Activated CD4-positive, alpha-beta memory T cell treated with anti-CD3 and anti-CD28 coated beads, Interleukin-2, amount 10 ng/mL, durations not matched to agents 7 days and 5 days (primary cell): ENCODE measurements at regions of chr11 and their contacts with region 1.

Region 1: DNA sequence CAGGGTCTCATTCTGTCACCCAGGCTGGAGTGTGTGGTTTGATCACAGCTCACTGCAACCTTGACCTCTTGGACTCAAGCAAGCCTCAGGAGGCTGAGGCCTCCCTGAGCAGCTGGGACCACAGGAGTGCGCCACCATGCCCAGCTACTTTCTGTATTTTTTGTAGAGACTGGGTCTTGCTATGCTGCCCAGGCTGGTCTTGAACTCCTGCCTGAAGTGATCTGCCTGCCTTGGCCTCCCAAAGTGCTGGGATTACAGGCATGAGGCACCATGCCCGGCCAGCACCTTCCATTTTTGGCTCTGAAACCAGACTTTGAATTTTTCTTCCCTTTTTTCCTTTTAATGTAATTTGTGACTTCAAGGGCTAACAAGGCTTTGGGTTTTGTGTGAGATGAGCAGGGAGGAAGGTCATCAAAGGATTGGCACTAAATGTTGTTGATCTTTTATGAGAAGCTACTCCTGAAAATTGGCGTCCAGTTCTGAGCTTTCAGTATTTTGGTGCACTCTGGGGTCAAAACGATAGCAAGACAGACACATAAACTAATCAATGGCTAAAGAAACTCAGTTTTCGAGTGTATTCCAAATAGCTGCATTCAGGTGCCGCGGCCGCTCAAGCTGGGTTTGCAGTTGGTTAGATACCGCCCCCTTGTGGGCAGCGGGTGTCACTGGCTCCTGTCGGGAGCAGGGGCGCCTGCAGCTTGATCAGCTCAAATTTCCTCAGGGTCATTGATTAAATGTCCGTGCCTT is 51.9 kb upstream of the CLMP start:
- DNase-seq: peak; percentile 86
- H3K4me3 Mint-ChIP-seq: no peak overlapping the region
- H3K27ac Mint-ChIP-seq: no peak overlapping the region
- H3K4me1 Mint-ChIP-seq: peaks cover 10% of the 10 kb centered on the region
- H3K27me3 Mint-ChIP-seq: peaks cover 30% of the 10 kb centered on the region

Region 2: GRCh38 chr11:123033895-123034294 is 213.0 kb before region 1 on chr11:
- CTCF ChIA-PET with region 1: interaction called, 10 read pairs
- POLR2A ChIA-PET with region 1: no interaction called
- DNase-seq: no peak
- H3K4me3 Mint-ChIP-seq: no peak overlapping the region
- H3K27ac Mint-ChIP-seq: no peak overlapping the region
- H3K4me1 Mint-ChIP-seq: no peaks in the 10 kb centered on the region
- H3K27me3 Mint-ChIP-seq: peaks cover 2% of the 10 kb centered on the region

Region 3: DNA sequence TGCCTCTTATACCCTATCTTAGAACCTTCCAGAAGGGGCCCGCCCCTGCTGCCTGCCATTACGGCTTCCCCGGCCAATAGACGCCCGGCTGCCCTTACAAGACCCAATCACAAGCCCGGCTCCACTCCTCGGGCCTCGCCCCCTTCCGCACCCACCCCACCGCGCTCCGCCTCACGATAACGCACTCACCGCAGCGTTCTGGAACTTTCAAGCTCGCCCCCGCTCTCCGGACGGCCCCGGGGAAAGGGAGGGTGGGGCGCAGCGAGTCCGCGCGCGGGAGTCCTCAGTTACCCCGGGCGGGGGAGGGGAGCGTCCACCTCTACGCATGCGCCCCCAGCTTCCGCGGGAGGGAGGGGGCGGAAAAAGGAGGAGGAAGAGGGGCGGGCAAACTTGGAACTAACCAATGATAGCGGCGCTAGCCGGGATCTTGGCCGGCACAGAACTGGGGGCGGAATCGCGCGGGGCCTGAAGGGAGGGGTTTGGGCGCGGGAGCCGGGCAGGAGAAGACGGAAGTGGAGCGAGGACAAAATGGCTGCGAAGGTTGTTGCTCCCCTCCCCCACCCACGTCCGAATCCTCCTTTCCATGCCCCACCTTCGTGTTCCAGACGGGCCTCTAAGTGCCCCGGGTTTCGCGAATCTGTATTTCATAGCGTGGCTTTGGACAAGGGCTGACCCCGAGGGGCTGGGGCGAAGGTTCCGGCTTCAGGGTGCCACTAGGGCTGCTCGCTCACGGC is 184.6 kb before region 1 on chr11:
- CTCF ChIA-PET with region 1: interaction called, 11 read pairs
- POLR2A ChIA-PET with region 1: interaction called, 5 read pairs
- DNase-seq: peak; percentile 99
- H3K4me3 Mint-ChIP-seq: peak overlapping the region; percentile 90
- H3K27ac Mint-ChIP-seq: peak overlapping the region; percentile 99
- H3K4me1 Mint-ChIP-seq: peaks cover 46% of the 10 kb centered on the region
- H3K27me3 Mint-ChIP-seq: no peaks in the 10 kb centered on the region

Region 4: DNA sequence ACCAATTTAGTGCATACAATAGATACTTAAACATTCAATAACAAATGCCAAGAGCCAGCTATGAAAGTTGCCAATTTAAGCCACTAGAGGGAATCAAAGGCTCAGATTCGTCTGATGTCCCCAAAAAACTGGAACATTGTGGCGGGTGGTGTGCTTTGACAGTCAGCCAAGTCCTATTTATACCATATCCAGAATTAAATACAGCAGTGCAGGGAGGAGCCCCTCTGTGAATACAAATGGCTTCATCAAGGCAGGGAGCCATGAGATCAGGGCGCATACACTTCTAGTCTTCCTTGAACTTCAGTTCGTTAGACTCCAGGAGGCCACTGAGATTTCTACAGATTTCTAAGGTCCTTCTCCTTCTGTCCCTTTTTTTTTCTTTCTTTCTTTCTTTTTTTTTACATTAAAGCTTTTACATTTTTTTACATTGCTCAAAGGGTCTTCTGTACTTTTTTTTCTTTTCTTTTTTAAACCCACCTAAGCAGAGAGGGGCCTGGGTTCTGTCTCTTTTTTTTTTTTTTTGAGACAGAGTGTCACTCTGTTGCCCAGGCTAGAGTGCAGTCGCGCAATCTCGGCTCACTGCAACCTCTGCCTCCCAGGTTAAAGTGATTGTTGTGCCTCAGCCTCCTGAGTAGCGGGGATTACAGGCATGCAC is 143.5 kb before region 1 on chr11:
- CTCF ChIA-PET with region 1: interaction called, 154 read pairs
- POLR2A ChIA-PET with region 1: interaction called, 3 read pairs
- DNase-seq: peak; percentile 36
- H3K4me3 Mint-ChIP-seq: no peak overlapping the region
- H3K27ac Mint-ChIP-seq: no peak overlapping the region
- H3K4me1 Mint-ChIP-seq: peaks cover 14% of the 10 kb centered on the region
- H3K27me3 Mint-ChIP-seq: no peaks in the 10 kb centered on the region

Region 5: GRCh38 chr11:123116486-123116885 is 130.4 kb before region 1 on chr11:
- CTCF ChIA-PET with region 1: interaction called, 154 read pairs
- POLR2A ChIA-PET with region 1: interaction called, 6 read pairs
- DNase-seq: no peak
- H3K4me3 Mint-ChIP-seq: no peak overlapping the region
- H3K27ac Mint-ChIP-seq: no peak overlapping the region
- H3K4me1 Mint-ChIP-seq: peaks cover 11% of the 10 kb centered on the region
- H3K27me3 Mint-ChIP-seq: peaks cover 3% of the 10 kb centered on the region

Region 6: DNA sequence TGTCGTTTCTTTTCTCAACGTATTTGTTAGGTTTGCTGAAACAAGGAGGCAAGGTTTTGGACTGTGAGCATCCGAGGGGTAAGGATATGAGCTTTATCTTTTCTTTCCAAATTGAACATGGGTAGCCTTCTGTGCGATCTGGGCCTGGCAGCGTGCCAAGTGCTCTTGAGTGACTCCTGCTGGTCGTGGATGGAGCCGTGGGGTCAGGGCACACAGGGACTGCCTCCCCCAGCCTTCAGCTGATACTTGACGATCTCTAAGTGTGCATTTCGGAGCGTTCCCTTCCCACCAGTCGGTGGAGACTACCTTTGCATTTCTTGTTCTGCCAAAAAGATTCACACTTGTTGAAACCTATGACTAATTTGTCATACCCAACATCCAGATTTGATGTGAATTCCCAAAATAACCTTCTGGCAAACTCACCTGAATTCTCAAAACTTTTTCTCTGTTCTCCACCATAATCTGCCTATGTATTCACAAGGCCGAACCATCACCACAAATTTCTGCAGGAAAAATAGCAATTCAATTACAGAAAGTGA is 11.7 kb before region 1 on chr11:
- CTCF ChIA-PET with region 1: interaction called, 17 read pairs
- POLR2A ChIA-PET with region 1: no interaction called
- DNase-seq: peak; percentile 40
- H3K4me3 Mint-ChIP-seq: no peak overlapping the region
- H3K27ac Mint-ChIP-seq: no peak overlapping the region
- H3K4me1 Mint-ChIP-seq: peaks cover 35% of the 10 kb centered on the region
- H3K27me3 Mint-ChIP-seq: peaks cover 11% of the 10 kb centered on the region

Region 7: GRCh38 chr11:123478352-123478987 is 231.5 kb after region 1 on chr11:
- CTCF ChIA-PET with region 1: interaction called, 20 read pairs
- POLR2A ChIA-PET with region 1: no interaction called
- DNase-seq: peak; percentile 39
- H3K4me3 Mint-ChIP-seq: peak overlapping the region; percentile 29
- H3K27ac Mint-ChIP-seq: peak overlapping the region; percentile 69
- H3K4me1 Mint-ChIP-seq: peaks cover 67% of the 10 kb centered on the region
- H3K27me3 Mint-ChIP-seq: no peaks in the 10 kb centered on the region